ENCODE measurements at regions of chr10 and their contacts with region 1.

Region 1: DNA sequence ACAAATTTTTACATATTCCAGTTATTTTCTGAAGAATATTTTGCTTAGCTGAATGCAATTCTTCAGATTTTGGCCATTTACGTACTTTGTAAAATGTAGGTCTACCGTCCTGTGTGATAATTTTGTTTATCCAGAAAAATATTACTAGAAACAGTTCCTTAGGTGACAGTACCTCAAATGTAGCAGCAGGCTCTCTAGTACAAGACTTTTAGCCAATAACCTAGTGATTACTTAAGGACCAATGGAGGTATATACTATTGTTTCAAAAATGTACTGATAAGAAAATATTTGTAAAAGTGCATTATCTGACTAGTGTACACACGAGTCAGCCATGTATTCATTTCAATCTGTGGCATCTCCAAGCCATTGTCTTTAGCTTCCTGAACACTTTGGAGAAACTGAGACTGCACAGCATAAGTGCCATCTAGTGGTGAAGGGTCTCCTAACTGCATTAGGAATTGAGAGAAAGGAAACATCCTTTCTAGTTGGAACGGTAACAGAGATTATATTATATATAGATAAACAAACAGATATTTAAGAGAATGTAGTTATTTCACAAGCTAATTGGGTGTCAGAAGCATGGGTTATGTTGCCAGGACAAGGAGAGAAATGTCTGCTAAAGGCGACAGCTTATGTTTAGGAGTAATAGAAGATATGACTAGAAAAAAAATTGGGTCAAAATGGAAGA is 23.7 kb downstream of the RTKN2 start:
- DNase-seq: peak; percentile 83
- ATAC-seq: peak; percentile 63
- H3K4me3 ChIP-seq: no peak overlapping the region; the same call in 1 of the 2 replicates
- H3K27ac ChIP-seq: peak overlapping the region; percentile 92
- H3K4me1 ChIP-seq: peaks cover 6% of the 10 kb centered on the region
- H3K27me3 ChIP-seq: no peaks in the 10 kb centered on the region
- CTCF ChIP-seq: peak; percentile 88
- POLR2A ChIP-seq: no peak
- RAD21 ChIP-seq: peak; percentile 93

Region 2: DNA sequence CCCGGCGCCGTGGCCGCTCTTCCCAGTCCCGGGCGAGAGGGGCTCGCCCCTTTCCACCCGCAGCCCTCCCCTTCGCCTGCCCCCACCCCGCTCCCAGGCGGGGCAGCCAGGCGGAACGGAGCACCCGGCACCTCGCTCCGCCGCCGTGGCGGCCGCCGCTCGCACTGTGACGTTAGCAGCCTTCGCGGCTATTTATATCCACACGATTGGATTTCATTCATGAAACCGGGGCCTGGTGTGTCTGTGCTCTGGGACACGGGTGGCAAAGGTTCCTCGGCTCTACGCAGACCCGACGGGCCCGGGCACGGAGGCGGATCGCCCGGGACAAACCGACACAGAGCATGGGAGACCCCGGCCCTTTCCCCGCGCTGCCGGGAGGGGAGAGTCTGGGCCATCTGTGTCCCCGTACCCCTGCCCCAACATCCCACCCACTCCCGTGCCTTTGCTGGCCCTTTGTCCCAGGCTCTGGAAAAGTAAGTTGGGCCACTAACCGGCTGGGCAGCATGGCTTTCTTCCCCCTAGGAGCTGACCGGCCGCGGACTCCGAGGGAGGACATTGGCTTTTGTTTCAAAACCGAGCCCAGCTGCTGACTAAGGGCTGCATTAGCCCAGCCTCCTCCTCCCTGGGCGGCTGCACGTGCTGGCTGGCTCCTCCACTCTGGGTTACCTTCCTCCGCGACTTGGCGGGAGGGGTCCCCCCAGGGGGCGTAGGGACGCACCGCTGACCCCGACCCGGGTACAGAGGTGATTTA is 1300.6 kb before region 1 on chr10 and contains the start of gene RHOBTB1:
- CTCF ChIA-PET with region 1: no interaction called
- POLR2A ChIA-PET with region 1: no interaction called
- dilution Hi-C with region 1: no loop called
- in situ Hi-C with region 1: loop called (anchors 25 kb)
- intact Hi-C with region 1: no loop called
- DNase-seq: peak; percentile 83
- ATAC-seq: peak; percentile 84
- H3K4me3 ChIP-seq: peak within 1 kb of the TSS; percentile 67
- H3K27ac ChIP-seq: peak within 1 kb of the TSS; percentile 92
- H3K4me1 ChIP-seq: peaks cover 2% of the 10 kb centered on the region; the same call in 1 of the 2 replicates
- H3K27me3 ChIP-seq: no peaks in the 10 kb centered on the region
- CTCF ChIP-seq: no peak
- POLR2A ChIP-seq: peak; percentile 90
- RAD21 ChIP-seq: no peak
- total RNA-seq, gene RHOBTB1: 15.2 and 18.9 TPM in 2 replicates

Region 3: DNA sequence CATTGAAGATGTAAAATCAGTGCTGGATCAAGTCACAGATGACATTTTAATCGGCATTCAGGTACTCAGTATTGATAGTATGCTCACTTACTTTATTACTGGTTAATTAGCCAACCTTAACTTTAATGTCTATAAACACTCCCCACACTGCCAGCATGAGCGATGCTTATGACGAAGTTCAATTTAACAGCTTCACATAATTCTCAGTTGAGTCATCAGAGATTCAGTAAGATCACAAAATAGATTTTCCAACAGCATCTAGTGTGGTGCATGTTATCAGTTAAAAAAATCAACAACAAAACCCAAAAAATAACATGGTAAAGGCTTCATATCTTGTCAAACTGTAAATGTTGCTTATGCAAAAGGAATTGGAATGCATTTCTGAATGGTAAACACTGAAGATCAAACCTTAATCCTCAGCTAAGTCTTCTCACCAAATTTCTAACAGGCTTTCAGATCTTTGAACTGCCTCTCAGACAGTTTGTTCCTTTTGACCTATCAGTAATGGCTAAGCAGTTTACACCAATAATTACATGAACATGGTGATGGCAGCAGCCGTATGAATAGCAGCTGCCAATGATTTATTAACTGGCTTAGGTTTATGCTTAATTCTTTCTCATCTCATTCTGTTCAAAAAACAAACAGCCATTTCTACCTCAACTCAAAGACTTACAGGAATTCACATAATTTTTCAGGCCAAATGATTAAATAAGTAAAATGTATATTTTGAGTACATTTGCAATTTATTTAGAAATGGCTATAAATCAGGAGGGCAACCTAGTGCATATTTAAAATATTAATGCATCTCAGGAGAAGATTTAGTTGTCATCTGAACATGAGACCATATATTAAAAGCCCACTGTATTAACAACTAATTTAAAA is 483.7 kb before region 1 on chr10:
- CTCF ChIA-PET with region 1: interaction called, 10 read pairs
- POLR2A ChIA-PET with region 1: no interaction called
- dilution Hi-C with region 1: no loop called
- in situ Hi-C with region 1: no loop called
- intact Hi-C with region 1: no loop called
- DNase-seq: peak; percentile 87
- ATAC-seq: peak; percentile 88
- H3K4me3 ChIP-seq: no peak overlapping the region
- H3K27ac ChIP-seq: peak overlapping the region; percentile 28; the same call in 1 of the 2 replicates
- H3K4me1 ChIP-seq: peaks cover 11% of the 10 kb centered on the region
- H3K27me3 ChIP-seq: no peaks in the 10 kb centered on the region
- CTCF ChIP-seq: no peak
- POLR2A ChIP-seq: no peak
- RAD21 ChIP-seq: no peak

Region 4: GRCh38 chr10:62082729-62083411 is 162.1 kb before region 1 on chr10:
- CTCF ChIA-PET with region 1: no interaction called
- POLR2A ChIA-PET with region 1: no interaction called
- dilution Hi-C with region 1: no loop called
- in situ Hi-C with region 1: no loop called
- intact Hi-C with region 1: loop called (anchors 2 kb)
- DNase-seq: peak; percentile 74
- ATAC-seq: 0 out of 2 replicates have a peak, but pooled peaks have one; percentile 2
- H3K4me3 ChIP-seq: no peak overlapping the region
- H3K27ac ChIP-seq: peak overlapping the region; percentile 91
- H3K4me1 ChIP-seq: peaks cover 34% of the 10 kb centered on the region
- H3K27me3 ChIP-seq: no peaks in the 10 kb centered on the region
- CTCF ChIP-seq: no peak
- POLR2A ChIP-seq: no peak
- RAD21 ChIP-seq: no peak

Region 5: GRCh38 chr10:62231371-62231770 is 13.6 kb before region 1 on chr10:
- CTCF ChIA-PET with region 1: no interaction called
- POLR2A ChIA-PET with region 1: interaction called, 16 read pairs
- dilution Hi-C with region 1: no loop called
- in situ Hi-C with region 1: no loop called
- intact Hi-C with region 1: no loop called
- DNase-seq: peak; percentile 92
- ATAC-seq: peak; percentile 56
- H3K4me3 ChIP-seq: no peak overlapping the region
- H3K27ac ChIP-seq: peak overlapping the region; percentile 100; the same call in 1 of the 2 replicates
- H3K4me1 ChIP-seq: peaks cover 20% of the 10 kb centered on the region
- H3K27me3 ChIP-seq: no peaks in the 10 kb centered on the region
- CTCF ChIP-seq: no peak
- POLR2A ChIP-seq: no peak
- RAD21 ChIP-seq: no peak